Astrocyte of the cerebellum (primary cell): ENCODE measurements at regions of chr6 and their contacts with region 1.

Region 1: DNA sequence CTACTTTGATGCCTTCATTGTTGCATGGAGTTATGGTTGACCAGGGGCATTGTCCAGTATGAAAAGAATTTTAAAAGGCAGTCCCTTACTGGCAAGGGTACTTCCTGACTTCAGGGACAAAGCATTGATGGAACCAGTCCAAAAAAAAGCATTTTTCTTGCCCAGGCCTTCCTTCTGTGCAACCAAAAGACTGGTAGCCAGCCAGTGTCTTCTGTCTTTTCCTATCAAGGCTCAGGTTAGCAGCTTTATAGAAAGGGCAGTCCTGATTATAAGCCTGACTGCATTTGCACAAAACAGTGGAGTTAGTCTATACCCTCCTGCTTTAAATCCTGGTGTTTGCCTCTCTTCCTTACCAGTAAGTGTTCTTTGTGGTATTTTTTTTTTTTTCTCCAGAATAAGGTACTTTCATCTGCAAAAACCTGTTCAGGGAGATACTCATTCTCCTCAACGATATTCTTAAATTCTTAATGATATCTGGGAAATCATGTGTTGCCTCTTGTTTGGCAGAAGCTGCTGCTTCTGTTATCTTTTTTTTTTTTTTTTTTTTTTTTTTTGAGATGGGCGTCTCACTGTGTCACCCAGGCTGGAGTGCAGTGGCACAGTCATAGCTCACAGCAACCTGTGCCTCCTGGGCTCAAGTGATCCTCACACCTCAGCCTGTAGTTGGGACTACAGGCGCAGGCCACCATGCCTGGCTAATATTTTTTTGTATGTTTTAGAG is 33.9 kb downstream of the SCAF8 start:
- DNase-seq: peak; percentile 2
- H3K4me3 ChIP-seq: no peak overlapping the region
- CTCF ChIP-seq: no peak

Region 2: GRCh38 chr6:154460306-154461071 is 306.7 kb before region 1 on chr6:
- in situ Hi-C with region 1: no loop called
- DNase-seq: peak; percentile 89
- H3K4me3 ChIP-seq: no peak overlapping the region
- CTCF ChIP-seq: no peak

Region 3: DNA sequence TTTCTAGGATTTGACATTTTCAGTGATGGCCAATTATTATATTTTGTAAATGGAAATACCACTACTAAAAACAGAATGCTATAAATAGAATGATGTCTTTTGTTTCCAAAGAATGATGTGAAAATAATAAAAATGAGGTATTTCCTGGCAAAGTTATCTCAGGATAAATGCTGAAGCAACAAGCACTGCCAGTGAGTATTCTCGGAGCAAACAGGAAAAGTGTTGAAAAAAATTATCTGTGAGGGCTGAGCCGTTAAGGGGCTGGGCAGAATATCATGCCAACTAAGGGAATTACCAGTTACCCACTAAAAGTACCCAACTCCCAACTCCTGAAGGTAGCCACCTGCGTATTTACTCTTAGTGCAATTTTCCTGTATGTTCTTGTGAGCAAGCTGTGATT is 57.5 kb before region 1 on chr6:
- in situ Hi-C with region 1: loop called (anchors 5 kb)
- DNase-seq: no peak
- H3K4me3 ChIP-seq: no peak overlapping the region
- CTCF ChIP-seq: no peak

Region 4: DNA sequence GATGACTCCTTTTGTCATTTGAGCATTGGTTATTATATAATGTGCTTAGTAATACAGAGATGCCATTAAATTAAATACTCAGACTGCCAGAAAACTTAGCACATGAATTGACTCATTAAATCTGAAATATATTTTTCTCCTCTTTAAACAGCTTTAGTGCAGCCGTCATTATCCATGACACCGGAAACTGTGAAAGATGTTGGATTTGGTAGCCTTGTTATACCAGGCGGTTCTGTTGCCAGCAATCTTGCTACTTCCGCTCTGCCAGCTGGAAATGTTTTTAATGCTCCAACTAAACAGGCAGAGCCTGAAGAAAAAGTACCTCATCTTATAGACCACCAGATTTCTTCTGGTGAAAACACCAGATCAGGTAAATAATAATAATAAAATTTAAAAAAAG is 63.6 kb after region 1 on chr6:
- in situ Hi-C with region 1: no loop called
- DNase-seq: no peak
- H3K4me3 ChIP-seq: no peak overlapping the region
- CTCF ChIP-seq: no peak